Kidney (tissue), 22 donors: ENCODE measurements at regions of chrX and their contacts with region 1.

Region 1: DNA sequence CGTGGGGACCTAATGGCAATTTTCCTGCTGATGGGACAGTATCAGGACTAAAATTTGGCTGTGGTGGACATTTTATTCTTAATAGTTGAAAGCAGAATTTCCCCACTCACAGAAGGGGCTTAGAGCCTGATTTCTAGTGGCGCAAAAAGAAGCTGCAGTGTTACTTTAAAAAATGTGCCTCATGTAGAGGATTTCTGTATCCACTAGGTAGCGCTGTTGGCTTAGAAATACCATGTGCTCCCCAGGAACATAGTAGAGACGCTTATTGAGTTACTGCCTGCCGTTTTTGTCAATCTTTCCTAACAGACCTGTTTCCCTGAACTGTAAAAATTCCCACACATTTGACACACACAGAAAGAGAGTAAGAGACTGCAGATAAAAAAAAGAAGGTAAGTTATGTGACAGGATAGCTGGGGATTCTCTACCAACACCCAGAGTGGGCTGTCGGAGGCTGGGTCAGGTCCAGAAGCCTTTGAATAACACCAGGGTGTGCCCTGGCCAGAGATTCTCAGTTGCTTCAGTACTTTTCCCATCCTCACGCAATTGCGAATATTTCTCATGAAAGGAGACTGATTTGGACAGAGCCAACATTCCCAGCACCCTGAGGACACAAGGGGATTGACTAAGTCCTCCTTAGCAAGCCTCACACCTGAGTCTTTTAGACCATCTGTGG is 88.4 kb downstream of the ZXDA start:
- DNase-seq: peak in 2 of 5 donors; percentile 39 to 56
- H3K4me3 ChIP-seq: peak overlapping the region in 2 of 3 donors; percentile 55 to 58
- H3K27ac ChIP-seq: no peak overlapping the region
- H3K4me1 ChIP-seq: no peaks in the 10 kb centered on the region
- H3K27me3 ChIP-seq: no peaks in the 10 kb centered on the region
- CTCF ChIP-seq: peak; percentile 74

Region 2: GRCh38 chrX:57752866-57753265 is 69.0 kb before region 1 on chrX:
- intact Hi-C with region 1: no loop called
- DNase-seq: no peak
- H3K4me3 ChIP-seq: no peak overlapping the region
- H3K27ac ChIP-seq: no peak overlapping the region
- H3K4me1 ChIP-seq: no peaks in the 10 kb centered on the region
- H3K27me3 ChIP-seq: no peaks in the 10 kb centered on the region
- CTCF ChIP-seq: no peak

Region 3: GRCh38 chrX:57929373-57929772 is 107.5 kb after region 1 on chrX:
- intact Hi-C with region 1: loop called (anchors 10 kb)
- DNase-seq: peak in 2 of 5 donors; percentile 35 to 50
- H3K4me3 ChIP-seq: no peak overlapping the region
- H3K27ac ChIP-seq: no peak overlapping the region
- H3K4me1 ChIP-seq: no peaks in the 10 kb centered on the region
- H3K27me3 ChIP-seq: no peaks in the 10 kb centered on the region
- CTCF ChIP-seq: peak; percentile 28